GM10248 (cell line): ENCODE measurements at regions of chr6 and their contacts with region 1.

Region 1: DNA sequence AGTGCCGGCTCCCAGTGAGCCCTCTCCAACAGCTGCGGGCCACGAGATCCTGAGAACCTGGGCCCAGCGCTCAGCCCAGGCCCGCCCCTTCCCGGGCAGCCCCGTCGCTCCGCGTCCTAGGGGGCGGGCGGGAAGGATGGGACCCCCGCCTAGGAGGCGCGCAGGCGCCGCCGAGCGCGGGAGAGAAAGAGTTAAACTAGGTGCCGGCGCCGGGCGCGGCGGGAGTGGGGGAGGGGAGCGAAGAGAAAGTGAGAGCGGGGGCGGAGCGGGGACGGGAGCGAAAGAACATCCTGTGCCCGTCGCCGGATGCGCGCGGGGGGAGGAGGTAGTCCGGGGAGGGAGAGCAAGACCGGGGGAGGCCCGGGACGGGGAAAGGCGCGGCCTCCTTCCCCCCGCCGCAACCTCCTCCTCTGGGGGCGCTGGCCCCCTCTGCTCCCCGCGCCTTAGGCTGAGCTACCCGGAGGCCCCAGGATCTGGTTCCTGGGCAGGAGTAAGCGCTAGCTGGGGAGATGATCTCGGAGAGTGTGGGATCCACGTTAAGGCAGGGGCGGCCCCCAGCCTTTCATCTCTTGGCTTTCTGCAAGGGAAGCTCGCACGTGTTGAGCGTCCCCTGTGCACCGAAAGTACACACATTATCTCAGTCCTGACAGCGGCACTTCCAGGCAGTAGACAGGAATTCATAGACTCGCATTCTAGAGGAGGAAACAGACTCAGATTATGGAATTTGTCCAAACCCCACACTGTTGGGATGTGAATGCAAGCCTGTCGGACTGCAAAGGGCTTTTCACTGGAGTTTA is 4.9 kb upstream of the ARMC12 start:
- DNase-seq: peak; percentile 91
- CTCF ChIP-seq: no peak

Region 2: DNA sequence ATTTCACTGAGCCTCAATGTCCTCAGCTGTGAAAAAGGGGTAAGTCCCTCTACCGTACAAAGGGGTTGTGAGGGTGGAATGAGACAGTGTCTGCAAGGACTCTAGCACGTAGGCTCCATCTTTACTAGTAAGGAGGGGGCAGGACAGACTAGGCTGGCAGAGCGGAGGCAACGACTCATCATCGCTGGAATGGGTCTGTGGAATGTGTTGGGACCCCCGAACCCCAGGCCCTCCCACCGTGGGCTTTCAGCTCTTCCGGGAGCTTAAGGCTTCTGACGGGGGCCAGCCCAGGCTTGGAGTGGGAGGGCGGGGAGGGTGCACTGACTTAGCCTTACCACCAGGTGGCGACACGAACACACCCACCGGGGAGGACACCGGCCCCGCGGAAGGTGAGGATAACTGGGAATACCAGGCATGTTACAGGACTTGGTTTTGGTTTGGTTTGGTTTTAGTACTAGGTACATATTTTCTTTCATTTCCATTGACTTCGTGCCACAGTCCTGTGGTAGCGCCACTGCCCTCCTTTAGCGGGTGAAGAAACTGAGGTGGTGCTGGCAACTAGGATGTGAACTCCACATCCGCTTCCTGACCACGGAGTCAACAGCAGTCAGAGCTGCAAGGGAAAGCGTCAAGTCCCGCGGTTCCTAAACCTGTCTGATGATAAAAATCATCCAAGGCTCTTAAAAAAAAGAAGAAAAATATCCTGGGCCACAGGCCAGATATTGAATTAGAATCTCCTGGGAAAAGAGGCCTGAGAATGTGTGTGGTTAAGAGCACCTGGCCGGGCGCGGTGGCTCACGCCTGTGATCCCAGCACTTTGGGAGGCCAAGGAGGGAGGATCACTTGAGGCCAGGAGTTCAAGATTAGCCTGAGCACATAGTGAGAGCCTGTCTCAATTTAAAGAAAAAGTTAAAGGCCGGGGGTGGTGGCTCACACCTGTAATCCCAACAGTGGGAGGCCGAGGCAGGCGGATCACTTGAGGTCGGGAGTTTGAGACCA is 209.0 kb before region 1 on chr6:
- CTCF ChIA-PET with region 1: interaction called, 88 read pairs
- POLR2A ChIA-PET with region 1: no interaction called
- DNase-seq: peak; percentile 87
- CTCF ChIP-seq: peak; percentile 88

Region 3: DNA sequence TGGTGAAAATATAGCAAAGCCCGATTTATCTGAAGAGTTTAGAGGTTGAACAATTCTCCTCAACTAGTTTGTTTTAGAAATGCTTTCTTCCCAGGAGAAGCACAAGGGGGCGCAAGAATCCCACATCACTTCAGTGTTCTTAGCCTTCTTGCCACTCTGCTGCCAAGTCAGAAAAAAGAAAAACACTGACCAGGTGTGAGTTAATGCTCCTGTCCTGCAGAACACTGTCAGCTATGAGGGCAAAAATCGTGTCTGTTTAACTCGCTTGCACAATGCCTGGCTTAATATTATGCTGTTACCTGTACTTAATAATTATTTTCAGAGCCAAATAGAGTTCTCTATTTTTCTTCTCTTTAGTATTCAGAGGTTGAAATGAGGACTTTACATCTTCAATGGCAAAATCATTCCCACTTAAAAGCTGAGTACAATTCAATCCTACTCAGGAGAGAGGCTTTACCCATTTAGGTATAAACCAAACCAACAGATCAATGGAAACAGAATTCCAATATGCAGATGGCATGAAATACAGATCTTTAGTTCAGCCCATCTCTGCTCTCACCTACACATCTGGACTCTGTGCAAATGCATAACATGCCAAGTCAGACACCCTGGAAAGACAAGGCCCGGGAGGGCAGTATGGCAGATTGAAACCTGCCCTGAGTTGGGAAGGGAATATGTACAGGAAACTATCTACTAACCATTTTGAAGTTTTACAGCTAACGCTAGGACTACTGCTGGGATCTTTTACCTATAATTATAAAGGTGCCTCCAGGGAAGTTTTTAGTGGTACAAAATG is 147.8 kb before region 1 on chr6:
- CTCF ChIA-PET with region 1: interaction called, 213 read pairs
- POLR2A ChIA-PET with region 1: no interaction called
- DNase-seq: peak; percentile 53
- CTCF ChIP-seq: peak; percentile 71

Region 4: GRCh38 chr6:35624341-35625070 is 107.4 kb before region 1 on chr6:
- CTCF ChIA-PET with region 1: interaction called, 11 read pairs
- POLR2A ChIA-PET with region 1: no interaction called
- DNase-seq: no peak
- CTCF ChIP-seq: no peak

Region 5: GRCh38 chr6:35663447-35664235 is 68.3 kb before region 1 on chr6:
- CTCF ChIA-PET with region 1: interaction called, 16 read pairs
- POLR2A ChIA-PET with region 1: no interaction called
- DNase-seq: no peak
- CTCF ChIP-seq: no peak

Region 6: DNA sequence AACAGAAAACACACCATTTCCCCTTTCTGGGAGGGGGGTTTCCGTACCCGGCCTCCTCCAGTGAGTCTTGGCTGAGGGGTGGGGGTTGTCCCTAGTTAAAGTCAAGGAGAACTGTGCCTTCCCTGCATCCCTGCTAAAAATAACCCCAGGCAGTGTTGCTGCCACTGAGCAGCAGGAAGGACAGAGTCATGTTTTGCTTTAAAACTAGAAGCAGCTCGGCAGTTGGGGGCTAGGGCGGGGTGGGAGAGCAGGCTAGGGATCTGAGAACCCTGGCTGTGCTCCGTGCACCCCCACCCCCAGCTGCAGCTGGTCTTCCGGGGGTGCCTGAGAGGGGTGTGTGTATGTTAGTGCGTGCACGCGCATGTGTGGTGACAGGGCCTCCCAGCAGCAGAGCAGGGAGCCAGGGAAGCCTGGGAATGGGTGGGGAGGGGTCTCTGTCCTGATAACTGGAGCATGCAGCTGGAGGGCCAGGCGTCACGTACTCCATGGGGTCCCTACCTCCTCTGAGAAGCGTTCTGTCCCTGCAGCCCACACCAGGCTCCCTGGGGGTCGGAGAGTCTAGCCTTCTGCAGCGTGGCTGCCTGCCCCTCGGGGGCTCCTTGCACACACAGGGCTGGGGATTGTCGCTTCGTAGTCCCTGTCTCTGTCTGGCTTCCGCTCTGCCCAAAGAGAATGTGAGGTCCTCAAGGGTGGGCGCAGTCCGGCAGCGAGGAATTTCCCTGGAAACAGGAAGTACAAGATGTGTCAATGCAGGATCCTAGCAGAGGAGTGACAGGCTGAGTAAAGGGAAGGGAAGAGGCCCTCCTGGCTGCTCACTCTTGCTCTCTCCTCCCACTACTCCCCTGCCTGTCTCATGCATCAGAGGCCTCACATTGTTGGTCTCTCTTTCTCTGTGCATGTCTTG is 11.9 kb before region 1 on chr6:
- CTCF ChIA-PET with region 1: interaction called, 30 read pairs
- POLR2A ChIA-PET with region 1: no interaction called
- DNase-seq: peak; percentile 79
- CTCF ChIP-seq: no peak

Region 7: DNA sequence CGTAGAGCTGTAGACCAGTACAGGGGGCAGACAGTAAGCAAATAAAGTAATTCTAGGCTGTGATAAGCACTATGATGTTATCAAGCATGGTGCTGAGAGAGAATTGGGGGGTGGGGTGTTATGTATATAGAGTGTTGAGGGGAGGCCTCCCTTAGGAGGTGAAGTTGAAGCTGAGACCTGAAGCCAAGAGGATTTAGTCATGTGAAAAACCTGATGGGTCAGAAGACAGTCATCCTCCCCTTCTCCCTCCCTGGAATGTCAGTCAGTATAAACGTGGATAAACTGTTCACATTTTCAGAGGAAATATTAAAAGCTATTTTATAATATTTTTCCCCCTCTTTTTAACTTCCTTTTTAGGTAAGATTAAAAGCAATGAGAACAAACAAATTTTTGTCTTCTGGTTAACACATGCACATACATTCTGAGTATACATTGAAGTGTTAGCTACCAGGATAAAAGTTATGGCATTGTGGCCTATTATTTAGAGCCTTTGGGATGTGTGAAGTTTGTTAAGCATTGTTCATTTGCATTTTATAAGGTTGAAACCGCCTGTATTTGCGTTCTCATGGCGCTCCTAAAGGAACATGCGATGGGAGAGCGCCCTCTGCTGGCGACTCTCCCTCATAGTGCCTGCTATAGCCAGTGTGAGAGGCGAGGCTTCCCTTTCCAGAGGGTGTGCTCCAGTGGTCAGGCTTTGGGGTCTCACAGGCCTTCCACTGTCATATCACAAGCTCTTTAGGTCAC is 363.0 kb after region 1 on chr6:
- CTCF ChIA-PET with region 1: interaction called, 10 read pairs
- POLR2A ChIA-PET with region 1: no interaction called
- DNase-seq: peak; percentile 69
- CTCF ChIP-seq: peak; percentile 92